ENCODE measurements at regions of chr11 and their contacts with region 1.

Region 1: DNA sequence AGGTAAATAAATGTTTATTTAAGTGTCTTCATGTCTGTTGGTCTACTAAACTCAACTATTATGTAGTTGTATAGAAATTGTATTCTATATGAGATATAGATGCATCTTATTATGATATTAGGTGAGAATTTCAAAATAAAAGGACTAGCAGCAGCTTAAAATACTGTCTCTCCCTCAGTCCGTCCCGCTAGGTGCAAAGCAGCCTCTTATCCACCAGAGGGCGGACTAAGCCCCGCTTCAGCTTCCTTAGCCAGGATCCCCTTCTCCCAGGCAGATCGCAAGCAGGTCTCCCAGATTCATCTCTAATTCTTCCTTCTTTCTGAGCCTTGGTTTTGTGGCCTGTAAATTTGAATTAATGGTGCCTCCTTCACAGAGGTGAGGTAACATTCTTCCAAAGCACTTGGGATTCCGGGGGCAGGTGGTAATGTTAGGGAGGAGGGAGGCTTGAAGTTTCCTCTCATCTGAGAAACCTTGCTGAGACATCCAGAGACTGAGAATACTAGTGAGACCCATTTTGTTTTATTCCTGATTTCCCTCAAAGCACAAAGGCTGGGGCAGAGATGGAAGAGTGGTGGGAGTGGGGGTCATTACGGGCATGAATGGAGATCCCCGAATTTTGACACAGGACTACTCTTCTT is 13.5 kb upstream of the INSC start:
- DNase-seq: peak; percentile 72
- ATAC-seq: peak; percentile 78
- H3K4me3 ChIP-seq: no peak overlapping the region
- H3K4me3 Mint-ChIP-seq: no peak overlapping the region
- H3K27ac ChIP-seq: no peak overlapping the region
- H3K27ac Mint-ChIP-seq: no peak overlapping the region
- H3K4me1 ChIP-seq: peaks cover under 1 to 9% of the 10 kb centered on the region in 2 donors
- H3K4me1 Mint-ChIP-seq: peaks cover 10% of the 10 kb centered on the region
- H3K27me3 ChIP-seq: peaks cover 0 to 4% (median 0%) of the 10 kb centered on the region in 4 experiments
- H3K27me3 Mint-ChIP-seq: peaks cover 26% of the 10 kb centered on the region
- CTCF ChIP-seq: peak; percentile 98

Region 2: GRCh38 chr11:15027011-15027410 is 74.2 kb before region 1 on chr11:
- CTCF ChIA-PET with region 1: no interaction called
- POLR2A ChIA-PET with region 1: no interaction called
- intact Hi-C with region 1: no loop called
- DNase-seq: no peak
- ATAC-seq: no peak
- H3K4me3 ChIP-seq: no peak overlapping the region
- H3K4me3 Mint-ChIP-seq: no peak overlapping the region
- H3K27ac ChIP-seq: no peak overlapping the region
- H3K27ac Mint-ChIP-seq: no peak overlapping the region
- H3K4me1 ChIP-seq: no peaks in the 10 kb centered on the region
- H3K4me1 Mint-ChIP-seq: no peaks in the 10 kb centered on the region
- H3K27me3 ChIP-seq: peaks cover 0 to 3% (median 0%) of the 10 kb centered on the region in 4 experiments
- H3K27me3 Mint-ChIP-seq: peaks cover 38% of the 10 kb centered on the region
- CTCF ChIP-seq: no peak

Region 3: GRCh38 chr11:15074206-15075161 is 26.7 kb before region 1 on chr11:
- CTCF ChIA-PET with region 1: interaction called, 18 read pairs
- POLR2A ChIA-PET with region 1: no interaction called
- intact Hi-C with region 1: no loop called
- DNase-seq: peak; percentile 78
- ATAC-seq: peak; percentile 82
- H3K4me3 ChIP-seq: peak overlapping the region in 4 of 5 experiments; percentile 20 to 51 (median 28)
- H3K4me3 Mint-ChIP-seq: peak overlapping the region; percentile 75
- H3K27ac ChIP-seq: no peak overlapping the region
- H3K27ac Mint-ChIP-seq: peak overlapping the region; percentile 41
- H3K4me1 ChIP-seq: peaks cover 19% of the 10 kb centered on the region in 2 donors
- H3K4me1 Mint-ChIP-seq: peaks cover 17% of the 10 kb centered on the region
- H3K27me3 ChIP-seq: peaks cover 0 to 52% (median 16%) of the 10 kb centered on the region in 4 experiments
- H3K27me3 Mint-ChIP-seq: peaks cover 60% of the 10 kb centered on the region
- CTCF ChIP-seq: peak; percentile 75

Region 4: DNA sequence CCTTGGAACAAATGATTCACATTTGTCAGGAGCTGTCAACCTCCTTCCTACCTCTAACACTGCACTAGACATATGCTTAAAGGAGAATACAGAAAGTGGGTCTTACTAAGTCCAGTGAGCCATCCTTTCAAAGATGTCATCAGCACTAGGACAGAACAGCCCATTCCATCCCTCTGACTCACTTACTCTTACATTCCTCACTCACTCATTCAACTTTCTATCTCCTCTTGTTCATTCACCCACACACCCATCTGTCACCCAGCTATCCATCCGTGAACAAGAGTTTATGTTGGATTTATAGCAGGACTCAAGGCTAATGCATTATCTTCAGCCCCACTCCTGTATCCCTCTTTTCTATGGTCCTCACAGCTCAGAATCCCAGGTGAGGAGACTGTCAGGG is 22.7 kb after region 1 on chr11:
- CTCF ChIA-PET with region 1: interaction called, 177 read pairs
- POLR2A ChIA-PET with region 1: no interaction called
- intact Hi-C with region 1: no loop called
- DNase-seq: no peak
- ATAC-seq: no peak
- H3K4me3 ChIP-seq: no peak overlapping the region
- H3K4me3 Mint-ChIP-seq: no peak overlapping the region
- H3K27ac ChIP-seq: no peak overlapping the region
- H3K27ac Mint-ChIP-seq: no peak overlapping the region
- H3K4me1 ChIP-seq: peaks cover 1 to 3% of the 10 kb centered on the region in 2 donors
- H3K4me1 Mint-ChIP-seq: peaks cover 4% of the 10 kb centered on the region
- H3K27me3 ChIP-seq: peaks cover 0 to 15% (median 6%) of the 10 kb centered on the region in 4 experiments
- H3K27me3 Mint-ChIP-seq: peaks cover 31% of the 10 kb centered on the region
- CTCF ChIP-seq: no peak

Region 5: GRCh38 chr11:15159085-15159484 is 57.9 kb after region 1 on chr11:
- CTCF ChIA-PET with region 1: interaction called, 131 read pairs
- POLR2A ChIA-PET with region 1: no interaction called
- intact Hi-C with region 1: loop called (anchors 1 kb)
- DNase-seq: peak; percentile 44
- ATAC-seq: peak; percentile 36
- H3K4me3 ChIP-seq: no peak overlapping the region
- H3K4me3 Mint-ChIP-seq: no peak overlapping the region
- H3K27ac ChIP-seq: no peak overlapping the region
- H3K27ac Mint-ChIP-seq: no peak overlapping the region
- H3K4me1 ChIP-seq: no peaks in the 10 kb centered on the region
- H3K4me1 Mint-ChIP-seq: no peaks in the 10 kb centered on the region
- H3K27me3 ChIP-seq: no peaks in the 10 kb centered on the region
- H3K27me3 Mint-ChIP-seq: peaks cover 6% of the 10 kb centered on the region
- CTCF ChIP-seq: peak; percentile 65

Region 6: DNA sequence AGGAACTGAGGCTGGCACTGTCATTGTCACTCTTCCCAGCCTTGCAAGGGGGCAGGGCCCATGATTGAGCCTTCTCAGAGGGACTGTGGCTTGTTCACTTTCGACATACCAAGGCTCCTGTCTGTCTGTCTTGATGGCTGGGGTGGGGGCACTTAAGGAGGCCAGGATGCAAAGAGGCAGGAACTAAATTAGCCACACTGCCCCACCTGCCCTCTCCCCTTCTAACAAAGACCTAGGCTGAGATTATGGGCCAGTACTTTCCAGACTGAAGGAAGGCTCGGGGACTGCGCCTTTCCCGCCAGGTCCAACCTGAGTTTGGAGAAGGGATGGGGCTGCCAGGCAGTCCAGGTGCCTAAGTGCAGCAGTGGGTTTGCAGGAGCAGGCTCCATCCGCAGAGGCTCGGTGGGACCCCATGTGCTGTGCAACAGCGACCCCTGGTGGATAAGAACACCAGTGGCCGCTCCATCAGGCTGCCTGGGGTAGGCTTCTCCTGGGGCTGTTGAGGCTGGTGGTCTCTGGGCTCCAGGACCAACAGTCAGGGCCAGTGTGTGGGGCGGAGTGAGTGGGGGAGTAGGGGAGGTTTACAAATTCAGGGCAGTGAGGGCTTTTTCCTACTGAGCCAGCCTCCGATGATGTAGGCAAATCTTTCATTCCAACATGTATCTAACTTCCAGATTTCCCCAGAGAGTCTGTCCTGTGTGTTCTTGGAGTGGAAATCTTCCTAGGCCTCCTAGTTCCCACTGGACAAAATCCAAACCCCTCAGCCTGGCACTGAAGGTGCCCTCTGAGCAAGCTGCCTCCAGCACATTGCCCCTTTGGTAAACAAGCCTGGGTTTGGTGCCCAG is 107.4 kb after region 1 on chr11:
- CTCF ChIA-PET with region 1: interaction called, 290 read pairs
- POLR2A ChIA-PET with region 1: no interaction called
- intact Hi-C with region 1: loop called (anchors 1 kb)
- DNase-seq: peak; percentile 81
- ATAC-seq: peak; percentile 92
- H3K4me3 ChIP-seq: no peak overlapping the region
- H3K4me3 Mint-ChIP-seq: no peak overlapping the region
- H3K27ac ChIP-seq: no peak overlapping the region
- H3K27ac Mint-ChIP-seq: no peak overlapping the region
- H3K4me1 ChIP-seq: no peaks in the 10 kb centered on the region
- H3K4me1 Mint-ChIP-seq: no peaks in the 10 kb centered on the region
- H3K27me3 ChIP-seq: peaks cover 0 to 17% (median 0%) of the 10 kb centered on the region in 4 experiments
- H3K27me3 Mint-ChIP-seq: peaks cover 19% of the 10 kb centered on the region
- CTCF ChIP-seq: peak; percentile 89